ENCODE measurements at regions of chr9 and their contacts with region 1.

Region 1: DNA sequence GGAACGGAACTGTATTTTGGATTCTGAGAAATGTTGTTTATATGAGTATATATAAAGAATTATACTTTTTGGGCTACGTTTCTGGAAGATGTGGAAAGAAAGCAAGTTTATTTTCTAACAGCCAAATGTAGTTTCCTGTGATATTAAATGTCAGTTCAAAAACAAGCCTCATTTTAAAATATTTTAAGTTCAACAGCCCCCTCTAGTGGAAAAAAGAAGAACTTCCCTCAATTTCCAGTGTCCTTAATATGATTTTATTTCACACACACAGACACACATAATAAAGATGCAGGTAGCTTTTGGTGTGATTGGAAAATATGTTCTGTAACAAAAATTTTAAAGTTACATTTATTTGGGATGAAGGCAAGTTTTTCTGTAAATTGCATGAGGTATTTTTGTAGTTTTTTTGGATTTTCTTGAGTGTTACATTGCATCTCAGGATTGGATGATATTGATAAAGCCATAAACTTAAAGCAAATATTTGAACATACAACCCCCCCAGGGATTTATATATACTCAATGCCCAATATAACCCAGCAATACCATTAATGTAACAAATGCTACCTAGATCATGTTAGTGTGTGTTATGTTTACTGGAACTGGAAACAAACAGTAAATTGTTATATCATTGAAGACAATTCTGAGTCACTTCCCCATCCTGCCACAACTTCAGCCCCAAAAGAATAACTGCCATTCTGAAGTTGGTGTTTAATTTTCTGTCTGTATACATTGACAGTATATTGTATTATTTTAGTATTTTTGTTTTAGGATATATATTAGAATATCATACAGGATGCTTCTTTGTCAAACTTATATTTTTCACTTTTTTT is 54.0 kb downstream of the CCDC171 start:
- DNase-seq: peak in 4 of 5 donors; percentile 54 to 66 (median 60)
- H3K4me3 ChIP-seq: no peak overlapping the region
- H3K4me3 Mint-ChIP-seq: no peak overlapping the region
- H3K27ac ChIP-seq: no peak overlapping the region
- H3K27ac Mint-ChIP-seq: no peak overlapping the region
- H3K4me1 ChIP-seq: no peaks in the 10 kb centered on the region
- H3K4me1 Mint-ChIP-seq: no peaks in the 10 kb centered on the region
- H3K27me3 ChIP-seq: no peaks in the 10 kb centered on the region
- H3K27me3 Mint-ChIP-seq: no peaks in the 10 kb centered on the region

Region 2: DNA sequence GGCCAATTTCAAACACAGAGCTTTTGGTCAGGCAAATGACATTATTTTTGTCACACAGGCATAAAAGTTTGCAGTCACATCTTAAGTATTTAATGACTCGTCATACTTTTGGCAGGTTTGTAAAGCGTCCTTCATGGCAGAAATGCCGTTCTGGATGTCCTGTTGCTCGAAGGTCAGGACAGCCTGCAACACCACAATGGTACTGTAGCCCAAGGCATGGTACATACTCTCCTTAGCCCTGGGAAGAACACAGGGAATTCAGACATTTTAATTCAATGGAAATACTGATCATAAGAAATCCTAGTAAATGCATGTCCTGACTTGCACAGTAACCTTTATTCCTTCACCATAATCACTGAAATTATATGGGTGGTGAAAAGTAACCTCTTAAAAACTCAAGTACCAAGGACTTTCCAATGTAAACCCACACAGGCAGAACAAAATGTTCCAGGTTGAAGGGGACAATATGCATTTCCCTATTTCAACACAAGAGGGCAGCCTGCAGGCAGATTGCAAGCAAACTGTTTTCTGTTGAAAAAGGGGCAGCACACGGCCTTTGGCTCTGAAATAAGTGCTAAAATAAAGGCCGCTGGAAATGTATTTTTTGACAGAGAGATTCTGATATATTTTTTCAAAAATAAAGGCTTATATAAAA is 395.6 kb before region 1 on chr9:
- CTCF ChIA-PET with region 1: interaction called, 47 read pairs
- POLR2A ChIA-PET with region 1: interaction called, 3 read pairs
- intact Hi-C with region 1: loop called (anchors 1 kb)
- DNase-seq: peak; percentile 46 to 63 (median 59)
- H3K4me3 ChIP-seq: no peak overlapping the region
- H3K4me3 Mint-ChIP-seq: no peak overlapping the region
- H3K27ac ChIP-seq: no peak overlapping the region
- H3K27ac Mint-ChIP-seq: peak overlapping the region in 1 of 7 donors; percentile 48
- H3K4me1 ChIP-seq: no peaks in the 10 kb centered on the region
- H3K4me1 Mint-ChIP-seq: peaks cover 4 to 10% (median 5%) of the 10 kb centered on the region in 4 donors
- H3K27me3 ChIP-seq: no peaks in the 10 kb centered on the region
- H3K27me3 Mint-ChIP-seq: no peaks in the 10 kb centered on the region

Region 3: DNA sequence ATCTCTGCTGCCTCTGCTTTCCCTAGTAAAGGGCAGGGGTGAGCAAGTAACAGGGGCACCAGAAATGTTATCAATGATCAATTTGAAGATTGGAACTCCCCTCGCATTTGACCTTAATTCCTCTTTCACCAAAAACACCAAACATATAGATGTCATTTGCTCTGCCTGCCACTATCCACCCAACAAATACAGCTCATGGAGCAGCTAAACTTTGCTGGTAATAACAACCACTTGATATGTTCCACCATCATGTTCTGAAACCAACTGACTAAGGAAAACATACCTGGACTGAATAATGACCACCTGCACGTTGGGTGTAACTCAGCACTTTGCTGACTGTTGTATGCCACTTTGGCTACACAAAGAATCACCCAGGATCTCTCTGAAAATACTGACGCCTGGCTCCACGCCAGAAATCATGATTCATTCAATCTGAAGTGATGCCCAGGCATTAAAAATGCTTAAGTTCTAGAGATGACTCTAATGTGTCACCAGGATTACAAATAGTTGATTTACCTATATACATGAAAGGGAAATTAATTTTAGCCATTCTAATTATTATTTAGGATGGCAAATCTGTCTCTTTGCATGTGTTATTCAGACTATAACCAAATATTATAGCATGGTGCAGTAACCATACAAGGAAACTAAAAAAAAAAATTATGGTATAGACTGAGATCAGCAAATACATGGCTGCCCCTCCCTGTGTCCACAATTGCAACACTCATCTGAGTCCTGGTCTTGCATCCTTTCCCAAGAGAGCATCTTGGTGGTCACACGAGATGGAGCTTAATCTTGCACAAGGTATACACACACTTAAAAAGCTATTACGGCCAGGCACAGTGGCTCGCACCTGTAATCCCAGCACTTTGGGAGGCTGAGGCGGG is 256.7 kb before region 1 on chr9:
- CTCF ChIA-PET with region 1: interaction called, 3 read pairs
- POLR2A ChIA-PET with region 1: no interaction called
- intact Hi-C with region 1: loop called (anchors 2 kb)
- DNase-seq: no peak
- H3K4me3 ChIP-seq: no peak overlapping the region
- H3K4me3 Mint-ChIP-seq: no peak overlapping the region
- H3K27ac ChIP-seq: no peak overlapping the region
- H3K27ac Mint-ChIP-seq: no peak overlapping the region
- H3K4me1 ChIP-seq: peaks cover 12% of the 10 kb centered on the region
- H3K4me1 Mint-ChIP-seq: peaks cover 12 to 14% (median 13%) of the 10 kb centered on the region in 4 donors
- H3K27me3 ChIP-seq: no peaks in the 10 kb centered on the region
- H3K27me3 Mint-ChIP-seq: no peaks in the 10 kb centered on the region

Region 4: GRCh38 chr9:15485836-15486666 is 120.8 kb before region 1 on chr9:
- CTCF ChIA-PET with region 1: interaction called, 3 read pairs
- POLR2A ChIA-PET with region 1: no interaction called
- intact Hi-C with region 1: loop called (anchors 5 kb)
- DNase-seq: peak in 4 of 5 donors; percentile 14 to 27 (median 20)
- H3K4me3 ChIP-seq: no peak overlapping the region
- H3K4me3 Mint-ChIP-seq: no peak overlapping the region
- H3K27ac ChIP-seq: no peak overlapping the region
- H3K27ac Mint-ChIP-seq: peak overlapping the region in 5 of 7 donors; percentile 16 to 57 (median 53)
- H3K4me1 ChIP-seq: peaks cover 17% of the 10 kb centered on the region
- H3K4me1 Mint-ChIP-seq: peaks cover 28 to 48% (median 34%) of the 10 kb centered on the region in 4 donors
- H3K27me3 ChIP-seq: no peaks in the 10 kb centered on the region
- H3K27me3 Mint-ChIP-seq: no peaks in the 10 kb centered on the region

Region 5: GRCh38 chr9:16058131-16058549 is 451.3 kb after region 1 on chr9:
- CTCF ChIA-PET with region 1: no interaction called
- POLR2A ChIA-PET with region 1: no interaction called
- intact Hi-C with region 1: no loop called
- DNase-seq: no peak
- H3K4me3 ChIP-seq: no peak overlapping the region
- H3K4me3 Mint-ChIP-seq: no peak overlapping the region
- H3K27ac ChIP-seq: no peak overlapping the region
- H3K27ac Mint-ChIP-seq: no peak overlapping the region
- H3K4me1 ChIP-seq: no peaks in the 10 kb centered on the region
- H3K4me1 Mint-ChIP-seq: peaks cover 0 to 5% (median 0%) of the 10 kb centered on the region in 4 donors
- H3K27me3 ChIP-seq: no peaks in the 10 kb centered on the region
- H3K27me3 Mint-ChIP-seq: peaks cover 0 to 2% of the 10 kb centered on the region in 2 donors

Measured in CD4-positive, alpha-beta memory T cell (primary cell).